Mammary epithelial cell (primary cell): ENCODE measurements at regions of chr12 and their contacts with region 1.

Region 1: DNA sequence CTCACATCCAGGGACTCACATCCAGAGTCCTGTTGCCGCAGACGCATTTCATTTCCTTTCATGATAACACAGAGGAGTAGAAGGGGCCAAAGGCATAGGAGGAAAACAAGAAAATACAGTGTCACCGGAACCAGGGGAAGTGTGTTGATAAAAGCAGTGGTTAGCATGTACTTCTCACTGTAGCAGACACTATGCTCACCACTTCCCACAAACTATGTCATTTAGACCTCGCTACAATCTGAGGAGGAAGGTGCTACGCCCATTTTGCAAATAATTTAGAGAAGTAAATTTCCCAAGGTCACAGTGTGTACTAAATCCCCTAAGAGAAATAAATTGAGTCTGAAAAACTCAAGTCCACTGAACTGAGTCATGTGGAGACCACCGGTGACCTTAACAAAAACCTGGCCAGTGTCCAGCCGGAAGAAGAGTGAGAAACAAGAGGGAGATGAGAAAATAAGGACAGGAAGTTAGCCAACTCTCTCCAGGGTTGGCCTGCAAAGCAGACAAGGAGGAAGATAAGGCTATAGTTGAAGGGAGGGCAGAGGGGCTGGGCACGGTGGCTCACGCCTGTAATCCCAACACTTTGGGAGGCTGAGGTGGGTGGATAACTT is 25.8 kb upstream of the TMCC3 start:
- DNase-seq: no peak
- H3K4me3 ChIP-seq: no peak overlapping the region
- H3K27ac ChIP-seq: no peak overlapping the region
- H3K4me1 ChIP-seq: peaks cover 8% of the 10 kb centered on the region
- H3K27me3 ChIP-seq: no peaks in the 10 kb centered on the region
- CTCF ChIP-seq: no peak

Region 2: DNA sequence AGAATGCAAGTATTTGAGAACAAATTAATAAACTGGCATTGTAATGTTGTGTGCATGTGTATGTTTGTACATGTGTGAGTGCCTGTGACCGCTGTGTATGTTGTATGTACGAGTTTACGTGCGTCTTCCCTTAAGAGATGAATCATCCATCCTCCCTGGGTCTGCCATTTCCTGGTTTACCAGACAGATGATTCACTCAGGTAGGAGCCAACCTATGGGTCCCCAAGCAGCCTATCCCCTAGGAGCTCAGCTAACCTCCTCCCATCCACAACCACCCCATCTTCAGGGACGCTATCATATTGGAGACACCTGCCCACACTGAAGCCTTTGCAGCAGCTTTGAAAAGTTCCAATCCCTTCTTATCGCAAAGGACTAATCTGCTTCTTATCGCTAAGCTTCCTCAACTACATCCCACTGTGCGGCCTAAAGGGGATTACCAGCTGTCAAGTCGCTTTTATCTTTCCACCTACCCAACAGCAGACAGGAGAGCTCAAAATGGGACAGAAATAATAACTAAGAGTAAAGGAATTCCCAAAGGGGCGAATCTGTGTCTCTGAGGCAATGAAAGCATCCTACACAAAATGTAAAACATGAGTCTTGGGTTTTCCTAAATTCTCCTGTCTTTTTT is 55.7 kb after region 1 on chr12:
- CTCF ChIA-PET with region 1: no interaction called
- dilution Hi-C with region 1: loop called (anchors 5 kb)
- in situ Hi-C with region 1: no loop called
- intact Hi-C with region 1: no loop called
- DNase-seq: no peak
- H3K4me3 ChIP-seq: no peak overlapping the region
- H3K27ac ChIP-seq: no peak overlapping the region
- H3K4me1 ChIP-seq: no peaks in the 10 kb centered on the region
- H3K27me3 ChIP-seq: peaks cover 3% of the 10 kb centered on the region
- CTCF ChIP-seq: no peak

Region 3: DNA sequence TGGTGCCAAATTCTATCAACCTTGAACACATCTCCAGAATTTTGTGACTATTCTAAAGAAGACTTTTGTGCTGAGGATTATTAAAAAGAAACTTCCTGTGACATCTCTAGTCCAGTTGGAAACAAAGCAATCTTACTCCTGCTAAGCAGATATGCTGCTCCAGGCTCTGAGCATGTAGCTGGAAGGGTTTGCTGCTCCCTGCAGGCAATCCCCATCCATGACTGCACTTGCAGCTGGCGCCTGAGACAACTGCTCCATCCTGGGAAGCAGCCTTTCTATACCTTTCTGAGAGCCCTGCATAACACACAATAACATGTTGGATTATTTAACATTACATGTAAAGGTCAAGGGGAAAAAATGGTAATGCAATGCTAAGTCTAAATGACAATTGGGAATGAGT is 222.3 kb after region 1 on chr12:
- CTCF ChIA-PET with region 1: no interaction called
- dilution Hi-C with region 1: no loop called
- in situ Hi-C with region 1: no loop called
- intact Hi-C with region 1: no loop called
- DNase-seq: no peak
- H3K4me3 ChIP-seq: no peak overlapping the region
- H3K27ac ChIP-seq: no peak overlapping the region
- H3K4me1 ChIP-seq: no peaks in the 10 kb centered on the region
- H3K27me3 ChIP-seq: no peaks in the 10 kb centered on the region
- CTCF ChIP-seq: peak in 1 of 2 donors; percentile 38

Region 4: GRCh38 chr12:94909663-94910062 is 233.5 kb after region 1 on chr12:
- CTCF ChIA-PET with region 1: no interaction called
- dilution Hi-C with region 1: no loop called
- in situ Hi-C with region 1: no loop called
- intact Hi-C with region 1: no loop called
- DNase-seq: no peak
- H3K4me3 ChIP-seq: no peak overlapping the region
- H3K27ac ChIP-seq: no peak overlapping the region
- H3K4me1 ChIP-seq: no peaks in the 10 kb centered on the region
- H3K27me3 ChIP-seq: no peaks in the 10 kb centered on the region
- CTCF ChIP-seq: no peak